ENCODE measurements at regions of chr2 and their contacts with region 1.

Region 1: DNA sequence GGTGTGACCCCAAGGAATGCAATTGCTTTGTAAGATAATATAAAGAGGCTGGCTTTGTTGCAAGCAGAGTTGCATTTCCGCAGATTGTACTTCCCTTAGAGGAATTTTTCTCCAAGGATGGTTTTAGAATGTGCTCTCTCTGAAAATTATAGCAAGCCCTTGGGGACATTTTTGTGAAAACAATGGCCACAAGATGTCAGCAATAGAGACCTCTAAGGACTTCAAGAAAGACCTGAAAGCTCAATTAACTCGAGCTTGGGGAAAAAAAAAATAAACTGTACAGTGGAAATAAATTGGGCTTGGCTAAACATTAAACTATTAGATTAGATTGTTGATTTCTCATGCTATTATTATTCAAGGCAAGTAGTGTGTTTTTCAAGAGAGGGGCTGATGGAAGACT is 81.3 kb upstream of the KYNU start:
- DNase-seq: peak in 1 of 2 experiments; percentile 6
- H3K4me3 ChIP-seq: no peak overlapping the region
- H3K4me3 Mint-ChIP-seq: no peak overlapping the region
- H3K27ac Mint-ChIP-seq: no peak overlapping the region
- H3K4me1 ChIP-seq: no peaks in the 10 kb centered on the region
- H3K4me1 Mint-ChIP-seq: no peaks in the 10 kb centered on the region
- H3K27me3 ChIP-seq: no peaks in the 10 kb centered on the region
- H3K27me3 Mint-ChIP-seq: no peaks in the 10 kb centered on the region
- CTCF ChIP-seq: peak in 1 of 2 experiments; percentile 19

Region 2: DNA sequence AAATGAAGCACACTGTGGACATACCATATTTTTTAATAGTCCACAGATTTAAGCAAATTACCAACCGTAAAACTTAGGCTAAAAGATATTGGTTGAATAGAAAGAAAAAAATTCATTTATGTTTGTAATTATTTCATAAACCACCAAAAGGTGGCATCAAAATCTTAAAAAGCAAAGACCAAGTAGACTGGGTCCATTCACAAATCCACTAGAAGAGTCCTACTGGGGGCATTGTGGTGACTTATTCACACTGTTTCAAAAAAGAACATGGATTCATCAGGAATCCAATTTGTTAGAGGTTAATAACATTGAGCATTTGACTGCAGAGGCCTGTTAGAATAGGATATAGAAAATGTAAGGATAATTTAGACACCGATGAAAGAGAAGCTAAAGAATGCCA is 113.6 kb before region 1 on chr2:
- CTCF ChIA-PET with region 1: no interaction called
- POLR2A ChIA-PET with region 1: no interaction called
- intact Hi-C with region 1: loop called (anchors 5 kb)
- DNase-seq: peak in 1 of 2 experiments; percentile 5
- H3K4me3 ChIP-seq: no peak overlapping the region
- H3K4me3 Mint-ChIP-seq: no peak overlapping the region
- H3K27ac Mint-ChIP-seq: no peak overlapping the region
- H3K4me1 ChIP-seq: no peaks in the 10 kb centered on the region
- H3K4me1 Mint-ChIP-seq: no peaks in the 10 kb centered on the region
- H3K27me3 ChIP-seq: no peaks in the 10 kb centered on the region
- H3K27me3 Mint-ChIP-seq: no peaks in the 10 kb centered on the region
- CTCF ChIP-seq: no peak

Region 3: GRCh38 chr2:142951190-142952007 is 155.2 kb after region 1 on chr2:
- CTCF ChIA-PET with region 1: no interaction called
- POLR2A ChIA-PET with region 1: no interaction called
- intact Hi-C with region 1: no loop called
- DNase-seq: no peak
- H3K4me3 ChIP-seq: no peak overlapping the region
- H3K4me3 Mint-ChIP-seq: no peak overlapping the region
- H3K27ac Mint-ChIP-seq: no peak overlapping the region
- H3K4me1 ChIP-seq: peaks cover 37% of the 10 kb centered on the region
- H3K4me1 Mint-ChIP-seq: peaks cover 29% of the 10 kb centered on the region
- H3K27me3 ChIP-seq: no peaks in the 10 kb centered on the region
- H3K27me3 Mint-ChIP-seq: no peaks in the 10 kb centered on the region
- CTCF ChIP-seq: no peak

Region 4: DNA sequence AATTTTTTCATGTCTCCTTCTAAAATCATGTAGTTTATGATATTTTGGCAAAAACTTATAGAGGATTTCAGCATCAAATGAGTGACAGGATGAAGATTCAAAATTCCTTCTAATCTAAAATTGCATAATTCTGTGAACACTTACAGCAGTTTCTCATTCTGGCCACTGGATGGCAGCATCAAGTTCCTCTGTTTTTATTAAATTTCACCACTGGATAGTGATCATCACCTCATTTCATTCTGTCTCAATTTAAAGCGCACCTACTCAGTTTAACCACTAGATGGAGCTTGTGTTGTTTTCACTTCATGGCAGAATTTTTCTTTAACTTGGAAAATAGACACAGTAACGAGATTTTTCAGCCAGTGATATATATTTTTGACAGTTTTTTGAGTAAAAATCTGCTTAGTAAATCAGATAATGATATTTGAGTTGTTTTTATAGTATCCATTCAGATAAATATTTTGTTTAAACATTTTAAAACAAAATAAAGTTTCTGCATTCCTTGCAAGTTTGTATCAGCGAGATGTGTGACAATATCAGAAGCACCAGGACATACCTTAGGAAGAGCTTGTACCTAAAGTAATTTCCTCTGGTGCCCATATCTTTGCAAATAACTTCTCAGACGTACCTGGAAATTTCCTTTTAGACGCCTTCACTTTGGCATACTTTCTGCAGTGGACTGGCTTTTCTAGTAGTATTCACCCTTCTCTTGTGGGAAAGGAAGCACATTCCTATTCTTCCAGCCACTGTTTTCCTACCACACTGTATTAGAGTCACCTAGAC is 238.3 kb after region 1 on chr2:
- CTCF ChIA-PET with region 1: no interaction called
- POLR2A ChIA-PET with region 1: no interaction called
- intact Hi-C with region 1: no loop called
- DNase-seq: peak; percentile 61 to 69
- H3K4me3 ChIP-seq: no peak overlapping the region
- H3K4me3 Mint-ChIP-seq: no peak overlapping the region
- H3K27ac Mint-ChIP-seq: no peak overlapping the region
- H3K4me1 ChIP-seq: peaks cover 12% of the 10 kb centered on the region
- H3K4me1 Mint-ChIP-seq: peaks cover 10% of the 10 kb centered on the region
- H3K27me3 ChIP-seq: no peaks in the 10 kb centered on the region
- H3K27me3 Mint-ChIP-seq: no peaks in the 10 kb centered on the region
- CTCF ChIP-seq: peak; percentile 93

Region 5: GRCh38 chr2:143128681-143129580 is 332.8 kb after region 1 on chr2 and contains the start of gene ARHGAP15:
- CTCF ChIA-PET with region 1: no interaction called
- POLR2A ChIA-PET with region 1: no interaction called
- intact Hi-C with region 1: no loop called
- DNase-seq: no peak
- H3K4me3 ChIP-seq: no peak within 1 kb of the TSS
- H3K4me3 Mint-ChIP-seq: no peak within 1 kb of the TSS
- H3K27ac Mint-ChIP-seq: no peak within 1 kb of the TSS
- H3K4me1 ChIP-seq: no peaks in the 10 kb centered on the region
- H3K4me1 Mint-ChIP-seq: no peaks in the 10 kb centered on the region
- H3K27me3 ChIP-seq: no peaks in the 10 kb centered on the region
- H3K27me3 Mint-ChIP-seq: peaks cover 3% of the 10 kb centered on the region
- CTCF ChIP-seq: no peak
- total RNA-seq, gene ARHGAP15: not detected in 2 replicates

Measured in Caco-2 (cell line).